Right ventricle myocardium inferior (tissue), 1 donor: ENCODE measurements at regions of chr11 and their contacts with region 1.

Region 1: DNA sequence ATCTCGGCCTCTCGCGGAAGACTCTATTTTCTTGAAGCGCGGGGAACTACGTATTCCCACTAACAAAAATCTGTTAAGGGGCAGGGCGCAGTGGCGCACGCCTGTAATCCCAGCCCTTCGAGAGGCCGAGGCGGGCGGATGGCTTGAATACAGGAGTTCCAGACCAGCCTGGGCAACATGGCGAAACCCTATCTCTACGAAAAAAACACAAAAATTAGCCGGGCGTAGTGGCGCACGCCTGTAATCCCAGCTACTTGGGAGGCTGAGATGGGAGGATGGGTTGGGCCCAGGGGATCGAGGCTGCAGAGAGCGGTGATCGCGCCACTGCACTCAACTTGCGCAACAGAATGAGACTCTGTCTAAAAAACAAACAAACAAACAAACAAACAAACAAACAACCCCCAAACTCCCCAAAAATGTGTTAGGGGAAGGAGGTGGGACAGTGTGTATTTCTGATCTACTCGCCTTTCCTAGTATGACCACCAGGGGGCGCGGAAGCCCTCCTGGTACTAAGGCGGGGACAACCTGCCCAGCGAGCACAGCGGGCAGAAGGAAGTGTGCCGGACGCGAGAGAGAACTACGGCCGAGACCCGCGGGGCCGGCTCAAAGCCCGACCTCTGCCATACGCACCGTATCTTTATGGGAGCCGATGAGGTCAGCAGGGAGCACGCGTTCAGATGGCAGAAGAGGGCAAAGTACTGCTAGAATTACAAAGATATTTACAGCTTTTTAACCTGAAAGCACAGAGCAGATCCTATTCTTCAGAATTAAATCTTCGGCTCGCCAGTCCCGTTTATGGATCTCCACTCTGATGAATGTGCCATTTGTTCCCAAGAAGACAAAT is 1.3 kb upstream of the STX3 start:
- DNase-seq: peak; percentile 95
- ATAC-seq: peak; percentile 84

Region 2: GRCh38 chr11:59668950-59669610 is 84.8 kb before region 1 on chr11 and contains the start of gene PATL1:
- intact Hi-C with region 1: loop called (anchors 5 kb)
- DNase-seq: peak; percentile 100
- ATAC-seq: peak; percentile 98
- total RNA-seq, gene PATL1: 22.3 TPM

Region 3: DNA sequence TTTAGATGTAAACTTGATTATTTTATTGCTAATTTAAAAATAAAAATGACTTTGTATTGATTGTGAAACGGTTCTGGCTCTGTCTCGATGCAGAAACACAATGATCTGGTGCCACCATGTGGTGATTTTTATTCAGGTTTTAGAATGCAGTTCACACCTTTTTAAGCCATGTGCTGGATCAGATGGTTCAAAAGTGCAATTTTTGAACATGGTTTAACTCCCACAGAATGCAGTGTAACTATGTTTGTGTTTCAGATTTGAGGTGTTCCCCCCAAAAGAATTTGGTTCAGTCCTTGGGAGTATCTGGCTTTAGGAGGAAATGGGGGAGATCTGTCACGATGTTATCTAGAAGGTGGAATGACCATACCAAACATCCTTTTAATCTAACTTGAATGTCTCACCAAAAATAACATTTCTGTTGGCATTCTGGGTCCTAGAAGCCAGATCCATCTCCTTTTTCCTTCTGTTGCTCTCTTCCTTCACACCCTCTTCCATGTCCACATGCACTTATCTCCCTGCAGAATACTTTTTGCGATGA is 48.8 kb after region 1 on chr11:
- intact Hi-C with region 1: loop called (anchors 1 kb)
- DNase-seq: no peak
- ATAC-seq: peak; percentile 87

Region 4: GRCh38 chr11:59810189-59810910 is 56.5 kb after region 1 on chr11 and contains the start of gene MRPL16:
- intact Hi-C with region 1: loop called (anchors 2 kb)
- DNase-seq: peak; percentile 90
- ATAC-seq: peak; percentile 98
- total RNA-seq, gene MRPL16: 92.9 TPM